ENCODE measurements at regions of chr20 and their contacts with region 1.

Region 1: GRCh38 chr20:31835977-31836852 is 9.2 kb downstream of the FOXS1 start:
- DNase-seq: peak; percentile 89 to 94
- ATAC-seq: peak; percentile 81 to 96
- H3K4me3 ChIP-seq: no peak overlapping the region
- H3K27ac ChIP-seq: peak overlapping the region; percentile 79 to 95 (median 80)
- H3K4me1 ChIP-seq: peaks cover 14 to 33% of the 10 kb centered on the region in 2 donors
- H3K27me3 ChIP-seq: no peaks in the 10 kb centered on the region
- CTCF ChIP-seq: no peak
- POLR2A ChIP-seq: no peak

Region 2: DNA sequence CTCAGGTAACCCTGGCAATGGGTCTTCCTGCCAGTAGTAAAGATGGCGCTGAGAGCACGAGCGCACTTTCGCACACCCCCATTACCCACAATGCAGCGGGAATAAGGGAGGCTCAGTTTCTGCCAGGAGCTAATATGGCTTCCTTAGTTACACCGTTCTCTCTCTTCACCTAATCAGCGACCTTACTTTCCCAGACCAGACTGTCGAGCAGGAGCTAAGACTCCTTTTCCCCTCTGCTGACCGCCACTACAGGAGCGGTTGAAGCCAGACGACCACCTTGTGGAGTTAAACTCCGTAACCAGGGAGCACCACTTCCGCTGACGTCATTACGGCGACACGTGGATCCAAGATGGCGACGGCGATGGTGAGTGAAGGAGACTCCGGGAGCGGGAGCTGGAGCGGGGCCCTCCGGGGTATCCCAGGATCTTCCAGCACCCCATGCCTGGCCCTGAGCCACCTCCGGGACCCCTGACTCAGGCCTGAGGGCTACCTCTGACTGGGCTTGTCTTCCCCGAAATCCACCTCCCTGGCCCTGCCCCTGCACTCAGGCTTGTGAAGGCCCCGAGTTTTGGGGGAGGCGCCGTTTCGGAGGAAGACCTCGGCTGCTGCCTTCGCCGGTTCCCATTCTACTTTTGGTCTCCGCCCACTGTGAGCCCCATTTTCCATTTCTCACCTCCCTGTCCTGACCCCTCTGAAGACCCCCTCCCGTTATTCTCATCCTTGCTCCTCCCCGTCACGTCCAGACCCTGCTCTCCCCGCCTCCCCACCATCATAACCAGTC is 273.4 kb after region 1 on chr20 and contains the start of gene TM9SF4:
- in situ Hi-C with region 1: no loop called
- intact Hi-C with region 1: loop called (anchors 10 kb)
- DNase-seq: peak; percentile 85
- ATAC-seq: peak; percentile 97 to 99
- H3K4me3 ChIP-seq: peak within 1 kb of the TSS; percentile 94 to 100 (median 96)
- H3K27ac ChIP-seq: peak within 1 kb of the TSS; percentile 98 to 100 (median 99)
- H3K4me1 ChIP-seq: peaks cover 17 to 30% of the 10 kb centered on the region in 2 donors
- H3K27me3 ChIP-seq: no peaks in the 10 kb centered on the region
- CTCF ChIP-seq: no peak
- POLR2A ChIP-seq: peak; percentile 57 to 62
- total RNA-seq, gene TM9SF4: 18.0 to 22.9 (median 21.0) TPM